CD8-positive, alpha-beta T cell (primary cell): ENCODE measurements at regions of chr5 and their contacts with region 1.

Region 1: DNA sequence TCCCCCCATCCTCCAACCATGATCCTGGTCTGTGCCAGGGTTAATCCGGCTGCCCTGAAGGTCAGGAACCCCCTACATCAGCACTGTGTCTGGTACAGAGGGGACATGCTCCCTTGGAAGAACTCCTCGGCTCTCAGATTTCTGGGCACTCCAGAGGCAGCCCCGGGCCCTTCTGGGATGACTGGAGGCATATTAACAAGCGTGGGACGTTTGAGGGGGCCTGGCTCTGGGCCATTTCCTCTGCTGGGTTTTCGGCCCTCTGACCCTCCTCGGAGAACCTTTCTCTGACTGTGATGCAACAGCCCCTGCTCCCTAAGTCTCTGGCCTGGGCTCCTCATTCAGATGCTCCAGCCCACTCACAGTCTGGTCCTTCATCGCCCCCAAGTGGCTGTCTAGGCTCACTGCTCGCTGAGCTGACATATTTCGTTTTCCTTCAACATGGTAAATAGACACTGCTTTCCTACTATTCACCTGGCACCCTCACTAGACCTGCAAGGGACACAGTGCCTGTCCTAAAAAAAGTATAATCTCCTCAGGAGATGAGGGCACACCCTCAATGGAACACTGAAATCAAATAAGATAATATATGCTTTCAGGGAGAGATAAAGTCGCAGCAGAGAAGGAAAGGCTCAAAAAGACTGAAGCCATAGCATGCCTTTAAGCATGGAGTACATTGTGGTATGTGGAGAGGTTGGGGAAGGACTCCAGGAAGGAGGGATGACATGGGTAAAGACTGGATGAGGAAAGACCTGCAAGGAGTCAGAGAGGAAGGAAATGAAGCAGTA is 404.7 kb upstream of the TRPC7 start:
- DNase-seq: peak in 5 of 9 experiments; percentile 1 to 37 (median 19)
- ATAC-seq: no peak
- H3K4me3 ChIP-seq: no peak overlapping the region
- H3K4me3 Mint-ChIP-seq: no peak overlapping the region
- H3K27ac ChIP-seq: no peak overlapping the region
- H3K27ac Mint-ChIP-seq: no peak overlapping the region
- H3K4me1 ChIP-seq: no peaks in the 10 kb centered on the region
- H3K4me1 Mint-ChIP-seq: no peaks in the 10 kb centered on the region
- H3K27me3 ChIP-seq: no peaks in the 10 kb centered on the region
- H3K27me3 Mint-ChIP-seq: peaks cover 5% of the 10 kb centered on the region
- CTCF ChIP-seq: no peak

Region 2: GRCh38 chr5:134845852-134846640 is 1924.0 kb before region 1 on chr5 and contains the start of gene C5orf24:
- CTCF ChIA-PET with region 1: no interaction called
- POLR2A ChIA-PET with region 1: no interaction called
- intact Hi-C with region 1: no loop called
- DNase-seq: peak; percentile 82 to 98 (median 90)
- ATAC-seq: peak; percentile 92
- H3K4me3 ChIP-seq: peak within 1 kb of the TSS; percentile 85 to 94
- H3K4me3 Mint-ChIP-seq: peak within 1 kb of the TSS; percentile 87
- H3K27ac ChIP-seq: peak within 1 kb of the TSS; percentile 84 to 91
- H3K27ac Mint-ChIP-seq: peak within 1 kb of the TSS; percentile 94
- H3K4me1 ChIP-seq: peaks cover 18% of the 10 kb centered on the region
- H3K4me1 Mint-ChIP-seq: peaks cover 34% of the 10 kb centered on the region
- H3K27me3 ChIP-seq: no peaks in the 10 kb centered on the region
- H3K27me3 Mint-ChIP-seq: no peaks in the 10 kb centered on the region
- CTCF ChIP-seq: no peak
- total RNA-seq, gene C5orf24: 29.9 to 31.0 TPM

Region 3: GRCh38 chr5:136249678-136250266 is 520.3 kb before region 1 on chr5:
- CTCF ChIA-PET with region 1: interaction called, 9 read pairs
- POLR2A ChIA-PET with region 1: no interaction called
- intact Hi-C with region 1: loop called in 1 of 2 experiments (anchors 2 kb)
- DNase-seq: peak in 2 of 9 experiments; percentile 6 to 12
- ATAC-seq: no peak
- H3K4me3 ChIP-seq: no peak overlapping the region
- H3K4me3 Mint-ChIP-seq: no peak overlapping the region
- H3K27ac ChIP-seq: no peak overlapping the region
- H3K27ac Mint-ChIP-seq: no peak overlapping the region
- H3K4me1 ChIP-seq: no peaks in the 10 kb centered on the region
- H3K4me1 Mint-ChIP-seq: no peaks in the 10 kb centered on the region
- H3K27me3 ChIP-seq: no peaks in the 10 kb centered on the region
- H3K27me3 Mint-ChIP-seq: peaks cover 6% of the 10 kb centered on the region
- CTCF ChIP-seq: peak; percentile 28

Region 4: GRCh38 chr5:136308212-136308795 is 461.8 kb before region 1 on chr5:
- CTCF ChIA-PET with region 1: interaction called, 4 read pairs
- POLR2A ChIA-PET with region 1: no interaction called
- intact Hi-C with region 1: loop called in 1 of 2 experiments (anchors 2 kb)
- DNase-seq: no peak
- ATAC-seq: no peak
- H3K4me3 ChIP-seq: no peak overlapping the region
- H3K4me3 Mint-ChIP-seq: no peak overlapping the region
- H3K27ac ChIP-seq: no peak overlapping the region
- H3K27ac Mint-ChIP-seq: no peak overlapping the region
- H3K4me1 ChIP-seq: no peaks in the 10 kb centered on the region
- H3K4me1 Mint-ChIP-seq: no peaks in the 10 kb centered on the region
- H3K27me3 ChIP-seq: no peaks in the 10 kb centered on the region
- H3K27me3 Mint-ChIP-seq: peaks cover 9% of the 10 kb centered on the region
- CTCF ChIP-seq: no peak

Region 5: GRCh38 chr5:136374003-136374402 is 396.1 kb before region 1 on chr5:
- CTCF ChIA-PET with region 1: no interaction called
- POLR2A ChIA-PET with region 1: no interaction called
- intact Hi-C with region 1: loop called (anchors 5 kb)
- DNase-seq: peak in 2 of 9 experiments; percentile 4 to 15
- ATAC-seq: no peak
- H3K4me3 ChIP-seq: no peak overlapping the region
- H3K4me3 Mint-ChIP-seq: no peak overlapping the region
- H3K27ac ChIP-seq: no peak overlapping the region
- H3K27ac Mint-ChIP-seq: no peak overlapping the region
- H3K4me1 ChIP-seq: no peaks in the 10 kb centered on the region
- H3K4me1 Mint-ChIP-seq: no peaks in the 10 kb centered on the region
- H3K27me3 ChIP-seq: no peaks in the 10 kb centered on the region
- H3K27me3 Mint-ChIP-seq: peaks cover 2% of the 10 kb centered on the region
- CTCF ChIP-seq: no peak

Region 6: DNA sequence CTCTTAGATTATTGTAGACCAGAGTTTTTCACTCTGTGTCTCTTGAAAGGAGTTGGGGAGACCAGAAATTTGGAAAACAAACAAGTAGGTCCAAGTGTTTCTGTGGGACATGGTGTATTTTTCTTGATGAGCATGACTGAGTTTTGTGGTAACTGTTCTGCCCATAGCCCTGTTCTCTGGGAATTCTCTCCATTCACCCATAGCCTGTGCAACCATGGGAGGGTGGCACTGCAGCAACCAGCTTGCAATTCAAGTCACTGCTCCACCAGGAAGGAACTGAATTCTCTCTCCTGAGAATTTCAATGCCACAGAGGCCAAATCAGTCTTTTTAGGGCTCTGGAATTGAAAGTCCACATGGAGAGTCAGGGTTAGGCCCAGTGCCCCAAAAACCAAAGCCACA is 70.5 kb after region 1 on chr5:
- CTCF ChIA-PET with region 1: no interaction called
- POLR2A ChIA-PET with region 1: no interaction called
- intact Hi-C with region 1: no loop called
- DNase-seq: no peak
- ATAC-seq: no peak
- H3K4me3 ChIP-seq: no peak overlapping the region
- H3K4me3 Mint-ChIP-seq: no peak overlapping the region
- H3K27ac ChIP-seq: no peak overlapping the region
- H3K27ac Mint-ChIP-seq: no peak overlapping the region
- H3K4me1 ChIP-seq: no peaks in the 10 kb centered on the region
- H3K4me1 Mint-ChIP-seq: no peaks in the 10 kb centered on the region
- H3K27me3 ChIP-seq: no peaks in the 10 kb centered on the region
- H3K27me3 Mint-ChIP-seq: no peaks in the 10 kb centered on the region
- CTCF ChIP-seq: no peak